CD14-positive monocyte (primary cell): ENCODE measurements at regions of chr1 and their contacts with region 1.

Region 1: DNA sequence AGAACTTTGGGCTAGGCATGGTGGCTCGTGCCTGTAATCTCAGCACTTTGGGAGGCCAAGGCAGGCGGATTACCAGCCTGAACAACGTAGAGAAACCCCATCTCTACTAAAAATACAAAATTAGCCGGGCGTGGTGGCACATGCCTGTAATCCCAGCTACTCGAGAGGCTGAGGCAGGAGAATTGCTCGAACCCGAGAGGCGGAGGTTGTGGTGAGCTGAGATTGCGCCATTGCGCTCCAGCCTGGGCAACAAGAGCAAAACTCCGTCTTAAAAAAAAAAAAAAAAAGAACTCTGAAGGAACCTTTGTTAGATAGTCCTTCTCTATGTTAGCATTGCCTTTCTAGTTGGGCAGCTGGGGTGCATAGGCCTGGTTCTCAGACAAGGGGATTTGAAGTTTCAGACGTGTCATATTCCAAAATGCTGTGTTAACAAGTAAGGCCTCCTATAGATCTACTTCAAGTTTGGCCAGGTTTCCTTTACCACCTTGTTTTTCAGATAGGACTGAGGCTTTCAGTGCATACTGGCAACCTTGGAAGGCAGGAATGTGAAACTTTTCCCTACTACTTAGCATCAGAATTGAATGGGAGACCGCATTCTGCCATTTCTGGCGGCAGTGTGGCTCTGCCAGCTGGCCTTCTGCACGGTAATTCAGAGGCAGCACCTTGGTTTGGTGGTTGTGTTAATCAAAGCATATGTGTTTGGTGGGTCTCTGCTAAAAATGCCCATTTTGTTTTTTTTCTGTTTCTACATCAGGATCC is 6.1 kb downstream of the UQCRH start:
- DNase-seq: no peak
- H3K4me3 ChIP-seq: no peak overlapping the region
- H3K4me3 Mint-ChIP-seq: no peak overlapping the region
- H3K27ac ChIP-seq: peak overlapping the region in 1 of 2 donors; percentile 58
- H3K27ac Mint-ChIP-seq: peak overlapping the region in 6 of 7 donors; percentile 22 to 81 (median 66)
- H3K4me1 ChIP-seq: peaks cover 32 to 43% of the 10 kb centered on the region in 2 donors
- H3K4me1 Mint-ChIP-seq: peaks cover 42% of the 10 kb centered on the region
- H3K27me3 ChIP-seq: no peaks in the 10 kb centered on the region
- H3K27me3 Mint-ChIP-seq: no peaks in the 10 kb centered on the region
- CTCF ChIP-seq: no peak

Region 2: GRCh38 chr1:46117810-46118494 is 191.6 kb before region 1 on chr1:
- intact Hi-C with region 1: no loop called
- DNase-seq: no peak
- H3K4me3 ChIP-seq: no peak overlapping the region
- H3K4me3 Mint-ChIP-seq: no peak overlapping the region
- H3K27ac ChIP-seq: no peak overlapping the region
- H3K27ac Mint-ChIP-seq: no peak overlapping the region
- H3K4me1 ChIP-seq: peaks cover 5% of the 10 kb centered on the region in 2 donors
- H3K4me1 Mint-ChIP-seq: peaks cover 9% of the 10 kb centered on the region
- H3K27me3 ChIP-seq: no peaks in the 10 kb centered on the region
- H3K27me3 Mint-ChIP-seq: peaks cover 0 to 4% (median 2%) of the 10 kb centered on the region in 3 donors
- CTCF ChIP-seq: no peak

Region 3: GRCh38 chr1:46352363-46352762 is 42.8 kb after region 1 on chr1:
- intact Hi-C with region 1: loop called in 1 of 2 experiments (anchors 5 kb)
- DNase-seq: no peak
- H3K4me3 ChIP-seq: no peak overlapping the region
- H3K4me3 Mint-ChIP-seq: no peak overlapping the region
- H3K27ac ChIP-seq: no peak overlapping the region
- H3K27ac Mint-ChIP-seq: peak overlapping the region in 2 of 7 donors; percentile 10 to 41
- H3K4me1 ChIP-seq: peaks cover 10 to 15% of the 10 kb centered on the region in 2 donors
- H3K4me1 Mint-ChIP-seq: peaks cover 21% of the 10 kb centered on the region
- H3K27me3 ChIP-seq: no peaks in the 10 kb centered on the region
- H3K27me3 Mint-ChIP-seq: no peaks in the 10 kb centered on the region
- CTCF ChIP-seq: no peak